A673 (cell line): ENCODE measurements at regions of chr11 and their contacts with region 1.

Region 1: DNA sequence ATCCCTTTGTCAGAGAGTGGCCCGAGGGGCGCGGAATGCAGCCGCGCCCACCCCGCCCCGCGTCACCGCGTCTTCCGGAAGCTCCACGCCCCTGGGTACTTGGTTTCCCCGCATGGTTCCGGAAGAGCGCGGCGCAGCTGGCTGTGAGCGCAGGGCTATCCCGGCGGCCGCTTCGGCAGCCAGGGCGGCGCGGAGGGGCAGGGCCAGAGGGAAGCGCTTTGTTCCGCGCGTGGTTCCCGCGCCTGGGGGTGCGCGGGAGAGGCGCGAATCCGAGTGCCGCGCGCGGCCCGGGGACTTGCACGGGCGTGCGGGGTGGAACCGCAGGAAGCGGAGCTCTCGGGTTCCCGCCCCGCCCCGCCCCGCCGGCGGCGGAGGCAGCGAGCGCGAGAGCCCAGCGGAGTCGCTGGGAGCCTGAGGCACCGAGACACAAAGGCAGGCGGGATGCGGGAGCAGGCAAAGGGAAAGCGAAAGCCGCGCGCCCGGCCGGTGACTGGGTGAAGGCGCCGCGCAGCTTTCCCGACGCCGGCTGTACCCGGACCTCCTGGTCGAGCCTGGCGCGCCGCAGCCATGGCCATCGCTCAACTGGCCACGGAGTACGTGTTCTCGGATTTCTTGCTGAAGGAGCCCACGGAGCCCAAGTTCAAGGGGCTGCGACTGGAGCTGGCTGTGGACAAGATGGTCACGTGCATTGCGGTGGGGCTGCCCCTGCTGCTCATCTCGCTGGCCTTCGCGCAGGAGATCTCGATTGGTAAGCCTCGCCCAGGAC is at the start of gene PANX1:
- DNase-seq: peak; percentile 95
- H3K4me3 ChIP-seq: peak within 1 kb of the TSS; percentile 84
- H3K27ac ChIP-seq: peak within 1 kb of the TSS; percentile 95
- H3K4me1 ChIP-seq: peaks cover 19% of the 10 kb centered on the region
- H3K27me3 ChIP-seq: no peaks in the 10 kb centered on the region
- CTCF ChIP-seq: no peak
- total RNA-seq, gene PANX1: 34.2 and 39.0 TPM in 2 replicates

Region 2: DNA sequence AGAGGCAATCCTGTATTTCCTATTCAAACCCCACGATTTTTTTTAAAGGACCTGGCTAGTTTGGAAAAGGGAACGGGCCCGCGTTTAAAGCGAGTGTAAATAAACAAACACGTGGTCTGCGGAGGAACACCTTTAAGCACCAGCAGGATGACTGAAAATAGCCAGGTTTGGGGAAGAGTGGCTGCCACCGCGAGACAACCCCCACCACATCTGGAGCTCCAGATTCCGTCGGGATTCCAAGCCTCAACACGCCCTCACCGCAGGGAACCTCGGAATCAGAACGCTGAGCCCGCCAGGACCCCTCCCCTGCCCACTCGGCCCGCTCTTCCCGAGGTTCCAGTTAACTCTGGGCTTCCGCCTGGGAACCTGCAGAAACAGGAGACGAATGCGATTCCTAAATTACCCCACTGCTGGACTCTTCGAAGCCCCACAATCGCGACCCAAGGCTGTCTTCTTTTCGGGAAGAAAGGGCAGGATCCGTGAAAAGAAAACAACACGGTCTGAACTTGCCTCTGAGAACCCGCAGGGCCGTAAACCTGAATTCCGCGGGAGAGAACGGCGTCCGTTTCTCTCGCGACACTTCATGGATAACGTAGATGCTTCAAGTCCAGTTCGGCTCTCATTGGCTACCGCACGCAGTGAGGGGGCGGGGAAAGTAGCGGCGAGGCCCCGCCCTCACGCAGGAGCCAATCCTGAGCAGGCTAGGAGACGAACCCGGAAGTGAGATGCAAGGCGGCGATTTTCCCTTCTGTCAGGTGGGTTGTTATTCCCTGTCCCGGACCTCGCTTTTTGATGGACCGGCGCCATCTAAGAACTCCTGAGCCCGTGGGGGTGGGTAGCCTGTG is 364.6 kb after region 1 on chr11 and contains the starts of genes ANKRD49 and MRE11:
- CTCF ChIA-PET with region 1: no interaction called
- POLR2A ChIA-PET with region 1: no interaction called
- intact Hi-C with region 1: loop called (anchors 5 kb)
- DNase-seq: peak; percentile 99
- H3K4me3 ChIP-seq: peak within 1 kb of the TSS; percentile 69
- H3K27ac ChIP-seq: peak within 1 kb of the TSS; percentile 92
- H3K4me1 ChIP-seq: peaks cover 14% of the 10 kb centered on the region
- H3K27me3 ChIP-seq: no peaks in the 10 kb centered on the region
- CTCF ChIP-seq: no peak
- total RNA-seq, gene ANKRD49: 14.6 and 15.5 TPM in 2 replicates
- total RNA-seq, gene MRE11: 42.6 and 44.7 TPM in 2 replicates